Head of caudate nucleus (tissue), 42 donors: ENCODE measurements at regions of chr6 and their contacts with region 1.

Region 1: DNA sequence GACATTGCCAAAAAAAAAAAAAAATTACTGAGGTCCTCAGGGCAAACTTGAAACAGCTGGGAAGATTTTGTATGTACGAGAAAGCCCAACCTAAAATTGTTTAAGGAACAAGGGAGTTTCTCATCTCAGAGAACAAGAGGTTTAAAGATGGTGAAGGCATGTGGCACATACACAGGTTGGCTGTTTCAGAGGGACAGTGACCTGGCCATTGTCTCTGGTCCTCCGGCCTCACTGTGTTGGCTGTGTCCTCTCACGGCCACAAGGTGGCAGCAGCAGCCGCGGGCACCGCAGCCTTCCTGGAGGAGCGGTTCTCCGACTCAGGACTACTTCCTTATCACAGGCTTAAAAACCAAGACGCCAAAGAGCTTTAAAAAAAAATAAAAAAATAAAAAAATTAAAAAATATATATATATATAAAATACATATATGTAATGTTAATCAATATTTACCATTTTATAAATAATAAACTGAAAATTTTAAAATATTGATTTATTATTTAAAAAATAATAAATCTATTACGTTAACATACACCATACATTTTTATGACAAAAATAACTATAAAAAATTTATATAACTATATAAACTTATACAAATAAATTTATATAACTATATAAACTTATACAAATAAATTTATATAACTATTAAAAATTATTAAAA is 52.8 kb downstream of the GTF2H5 start:
- DNase-seq: peak; percentile 47 to 94 (median 85)

Region 2: GRCh38 chr6:158081657-158081935 is 139.3 kb before region 1 on chr6:
- intact Hi-C with region 1: no loop called
- DNase-seq: peak in 2 of 42 donors; percentile 2 to 3

Region 3: GRCh38 chr6:158518191-158519127 is 297.5 kb after region 1 on chr6:
- intact Hi-C with region 1: loop called (anchors 5 kb)
- DNase-seq: peak; percentile 51 to 88 (median 76)